ENCODE measurements at regions of chr11 and their contacts with region 1.

Region 1: DNA sequence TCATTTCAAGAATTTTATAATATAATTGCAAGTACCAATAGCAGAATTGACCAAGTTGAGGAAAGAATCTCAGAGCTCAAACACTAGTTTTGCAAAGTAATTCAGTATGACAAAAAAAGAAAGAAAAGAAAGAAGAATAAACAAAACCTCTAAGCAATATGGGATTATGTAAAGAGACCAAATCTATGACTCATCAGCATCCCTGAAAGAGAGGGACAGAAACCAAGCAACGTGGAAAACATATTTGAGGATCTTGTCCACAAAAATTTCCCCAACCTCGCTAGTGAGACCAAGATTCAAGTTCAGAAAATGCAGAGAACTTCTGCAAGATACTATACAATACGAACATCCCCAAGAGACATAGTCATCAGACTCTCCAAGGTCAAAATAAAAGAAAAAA is 203.7 kb upstream of the DDI1 start:
- DNase-seq: no peak
- H3K4me3 Mint-ChIP-seq: no peak overlapping the region
- H3K27ac Mint-ChIP-seq: no peak overlapping the region
- H3K4me1 Mint-ChIP-seq: no peaks in the 10 kb centered on the region
- H3K27me3 Mint-ChIP-seq: no peaks in the 10 kb centered on the region
- CTCF ChIP-seq: no peak

Region 2: DNA sequence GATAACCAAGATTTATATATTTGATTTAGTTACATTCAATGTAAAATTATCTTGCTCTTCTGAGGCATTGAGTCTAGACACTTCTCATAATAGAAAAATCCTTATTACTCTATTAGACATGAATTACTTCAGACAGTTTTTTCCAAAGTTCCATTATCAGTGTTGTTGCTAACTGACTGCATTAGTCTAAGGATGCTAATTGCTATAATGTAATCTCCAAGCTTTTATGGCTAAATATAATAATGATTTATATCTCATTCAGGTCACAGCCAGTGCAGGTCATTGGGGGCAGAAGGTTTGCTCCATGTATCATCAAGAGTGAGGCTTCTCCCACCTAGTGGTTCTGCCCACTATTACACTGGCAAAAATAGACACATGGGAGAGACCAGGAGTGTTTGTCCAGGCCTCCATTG is 173.6 kb before region 1 on chr11:
- CTCF ChIA-PET with region 1: no interaction called
- intact Hi-C with region 1: no loop called
- DNase-seq: peak; percentile 6
- H3K4me3 Mint-ChIP-seq: no peak overlapping the region
- H3K27ac Mint-ChIP-seq: no peak overlapping the region
- H3K4me1 Mint-ChIP-seq: no peaks in the 10 kb centered on the region
- H3K27me3 Mint-ChIP-seq: no peaks in the 10 kb centered on the region
- CTCF ChIP-seq: no peak

Region 3: GRCh38 chr11:104531075-104531474 is 698.3 kb after region 1 on chr11:
- CTCF ChIA-PET with region 1: no interaction called
- intact Hi-C with region 1: no loop called
- DNase-seq: peak; percentile 12
- H3K4me3 Mint-ChIP-seq: no peak overlapping the region
- H3K27ac Mint-ChIP-seq: no peak overlapping the region
- H3K4me1 Mint-ChIP-seq: no peaks in the 10 kb centered on the region
- H3K27me3 Mint-ChIP-seq: no peaks in the 10 kb centered on the region
- CTCF ChIP-seq: no peak

Region 4: GRCh38 chr11:105644839-105645573 is 1812.2 kb after region 1 on chr11:
- CTCF ChIA-PET with region 1: interaction called, 11 read pairs
- intact Hi-C with region 1: no loop called
- DNase-seq: no peak
- H3K4me3 Mint-ChIP-seq: no peak overlapping the region
- H3K27ac Mint-ChIP-seq: no peak overlapping the region
- H3K4me1 Mint-ChIP-seq: no peaks in the 10 kb centered on the region
- H3K27me3 Mint-ChIP-seq: no peaks in the 10 kb centered on the region
- CTCF ChIP-seq: no peak

Measured in Calu3 (cell line).